BJ (cell line): ENCODE measurements at regions of chr12 and their contacts with region 1.

Region 1: DNA sequence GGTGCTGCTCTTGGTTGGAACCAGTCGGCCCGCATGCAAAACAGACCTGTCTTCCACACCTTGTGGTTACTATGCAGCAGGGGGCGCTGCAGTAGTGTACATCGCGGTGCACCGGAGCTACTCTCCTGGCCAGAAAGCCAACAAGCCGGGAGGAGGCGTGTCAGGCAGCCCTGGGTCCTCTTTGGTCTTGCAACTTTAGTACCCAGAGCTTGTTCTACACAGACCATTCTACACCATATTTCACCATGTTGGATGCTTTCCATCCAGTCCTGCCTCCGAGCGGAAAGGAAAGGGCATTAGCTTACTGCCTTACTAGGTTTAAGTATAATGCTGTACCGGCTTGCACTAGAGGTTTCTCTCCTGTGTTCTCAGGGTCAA is 927 bp upstream of the TMTC2 start:
- DNase-seq: peak; percentile 62
- H3K4me3 ChIP-seq: peak overlapping the region; percentile 73
- H3K27me3 ChIP-seq: no peaks in the 10 kb centered on the region; the same call in 1 of the 2 replicates
- CTCF ChIP-seq: peak; percentile 89

Region 2: GRCh38 chr12:82672811-82673495 is 12.8 kb before region 1 on chr12:
- CTCF ChIA-PET with region 1: interaction called, 11 read pairs
- POLR2A ChIA-PET with region 1: no interaction called
- DNase-seq: no peak
- H3K4me3 ChIP-seq: no peak overlapping the region
- H3K27me3 ChIP-seq: no peaks in the 10 kb centered on the region
- CTCF ChIP-seq: no peak

Region 3: DNA sequence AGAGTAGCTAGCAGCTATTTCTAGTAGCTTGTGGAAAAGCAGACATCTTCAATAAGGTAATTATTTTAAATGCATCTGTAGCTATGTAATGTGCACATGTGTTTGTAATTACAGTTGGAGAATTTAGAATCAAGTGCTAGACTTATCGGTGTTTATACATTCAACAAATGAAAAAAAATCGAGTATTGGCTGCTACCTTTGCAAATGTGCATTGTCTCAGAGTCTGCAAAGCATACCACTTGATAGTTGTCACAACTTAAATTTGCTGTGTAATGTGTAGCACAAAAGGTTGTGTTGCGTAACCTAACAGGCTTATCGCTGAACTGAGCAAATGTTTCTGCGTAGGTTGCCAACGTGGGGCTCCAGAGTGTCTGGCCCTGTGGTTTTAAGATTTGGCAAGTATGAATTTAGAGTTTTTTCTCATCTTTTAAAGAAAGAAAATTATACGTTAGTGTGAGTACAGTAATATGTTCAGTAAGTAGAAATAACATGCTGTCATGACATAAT is 45.2 kb after region 1 on chr12:
- CTCF ChIA-PET with region 1: no interaction called
- POLR2A ChIA-PET with region 1: interaction called, 13 read pairs
- DNase-seq: no peak
- H3K4me3 ChIP-seq: no peak overlapping the region
- H3K27me3 ChIP-seq: no peaks in the 10 kb centered on the region
- CTCF ChIP-seq: no peak

Region 4: DNA sequence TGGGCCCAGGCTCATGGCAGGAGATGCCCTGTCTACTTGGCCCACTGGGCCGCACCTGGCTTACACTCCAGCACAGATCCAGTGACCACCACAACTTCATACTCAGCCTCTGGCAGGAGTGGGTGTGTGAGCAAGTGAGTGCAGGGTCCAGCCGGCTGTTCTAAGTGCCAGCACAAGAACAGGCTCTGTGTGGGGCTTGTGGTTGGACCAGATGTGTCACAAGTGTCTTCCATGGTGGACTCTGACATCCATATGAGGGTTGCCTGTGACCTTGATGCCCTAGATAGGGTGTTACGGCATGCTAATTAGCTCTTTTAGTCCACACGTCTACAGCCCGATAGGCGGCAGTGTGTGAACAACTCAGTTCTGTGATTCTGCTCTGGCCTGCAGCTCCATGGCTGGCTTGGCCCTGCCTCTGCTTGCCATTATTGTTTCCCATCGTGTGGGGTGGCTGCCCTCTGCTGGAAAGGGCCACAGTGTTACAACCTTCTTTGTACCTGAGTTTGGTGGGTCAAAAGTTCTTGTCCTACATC is 1137.7 kb after region 1 on chr12:
- CTCF ChIA-PET with region 1: interaction called, 14 read pairs
- POLR2A ChIA-PET with region 1: no interaction called
- DNase-seq: no peak
- H3K4me3 ChIP-seq: no peak overlapping the region
- H3K27me3 ChIP-seq: no peaks in the 10 kb centered on the region
- CTCF ChIP-seq: peak; percentile 36

Region 5: DNA sequence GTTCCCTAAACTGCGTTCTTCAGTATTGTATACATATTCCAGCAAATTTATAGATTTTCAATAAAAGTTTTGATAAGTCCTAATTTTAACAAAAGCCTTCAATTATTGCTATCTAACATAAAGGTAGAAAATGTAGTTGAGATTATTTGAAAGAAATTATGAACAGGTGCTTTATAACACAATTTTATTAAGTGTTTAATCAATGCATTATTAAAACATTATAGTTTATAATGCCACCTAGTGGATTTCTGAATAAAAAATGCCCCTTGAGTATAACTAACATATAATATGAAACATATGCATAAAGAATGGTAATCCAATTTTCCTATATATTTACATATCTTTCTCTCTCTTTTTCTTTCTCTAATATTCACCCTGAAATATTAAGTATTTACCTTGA is 1711.5 kb after region 1 on chr12:
- CTCF ChIA-PET with region 1: interaction called, 10 read pairs
- POLR2A ChIA-PET with region 1: no interaction called
- DNase-seq: no peak
- H3K4me3 ChIP-seq: no peak overlapping the region
- H3K27me3 ChIP-seq: no peaks in the 10 kb centered on the region
- CTCF ChIP-seq: peak; percentile 13; the same call in 1 of the 2 replicates

Region 6: DNA sequence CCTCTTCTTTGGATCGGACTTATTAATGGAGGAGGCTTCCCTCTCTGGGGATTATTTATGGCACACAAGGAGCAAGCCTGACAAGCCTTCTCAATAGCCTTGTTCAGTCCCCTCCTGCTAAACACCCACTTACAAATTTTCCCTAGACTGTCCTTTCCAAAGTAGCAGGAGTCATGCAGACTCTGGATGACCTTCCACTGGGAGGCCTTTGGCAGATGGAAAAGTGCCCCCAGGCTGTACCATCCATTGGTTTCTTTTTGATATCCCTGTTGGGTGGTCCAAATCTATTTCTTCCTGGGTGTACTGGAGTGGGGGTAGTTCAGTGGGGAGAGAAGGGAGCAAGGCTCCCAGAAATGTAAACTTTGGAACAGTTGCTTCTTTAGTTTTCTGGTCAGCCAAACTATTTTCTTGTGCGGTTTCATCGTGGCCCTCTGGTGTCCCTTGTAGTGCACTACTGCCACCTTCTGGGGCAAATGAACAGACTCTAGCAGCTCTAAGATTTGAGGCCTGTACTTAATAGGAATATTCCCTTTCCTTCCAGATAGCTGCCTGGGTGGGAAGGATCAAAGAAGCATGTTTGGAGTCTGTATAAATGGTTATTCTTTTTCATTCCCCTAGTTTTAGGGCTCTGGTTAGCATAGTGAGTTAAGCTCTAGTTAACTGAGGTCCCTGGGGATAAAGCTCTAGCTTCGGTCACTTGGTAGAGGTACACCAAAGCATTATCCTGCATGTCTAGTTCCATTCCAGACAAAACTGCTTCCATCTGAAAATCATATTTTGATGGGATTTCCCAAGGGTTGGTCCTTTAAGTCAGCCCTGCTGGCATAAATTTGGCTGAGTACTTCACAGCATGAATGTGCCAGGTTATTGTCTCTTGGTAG is 1817.4 kb after region 1 on chr12:
- CTCF ChIA-PET with region 1: interaction called, 35 read pairs
- POLR2A ChIA-PET with region 1: no interaction called
- DNase-seq: no peak
- H3K4me3 ChIP-seq: no peak overlapping the region
- H3K27me3 ChIP-seq: no peaks in the 10 kb centered on the region
- CTCF ChIP-seq: peak; percentile 81

Region 7: DNA sequence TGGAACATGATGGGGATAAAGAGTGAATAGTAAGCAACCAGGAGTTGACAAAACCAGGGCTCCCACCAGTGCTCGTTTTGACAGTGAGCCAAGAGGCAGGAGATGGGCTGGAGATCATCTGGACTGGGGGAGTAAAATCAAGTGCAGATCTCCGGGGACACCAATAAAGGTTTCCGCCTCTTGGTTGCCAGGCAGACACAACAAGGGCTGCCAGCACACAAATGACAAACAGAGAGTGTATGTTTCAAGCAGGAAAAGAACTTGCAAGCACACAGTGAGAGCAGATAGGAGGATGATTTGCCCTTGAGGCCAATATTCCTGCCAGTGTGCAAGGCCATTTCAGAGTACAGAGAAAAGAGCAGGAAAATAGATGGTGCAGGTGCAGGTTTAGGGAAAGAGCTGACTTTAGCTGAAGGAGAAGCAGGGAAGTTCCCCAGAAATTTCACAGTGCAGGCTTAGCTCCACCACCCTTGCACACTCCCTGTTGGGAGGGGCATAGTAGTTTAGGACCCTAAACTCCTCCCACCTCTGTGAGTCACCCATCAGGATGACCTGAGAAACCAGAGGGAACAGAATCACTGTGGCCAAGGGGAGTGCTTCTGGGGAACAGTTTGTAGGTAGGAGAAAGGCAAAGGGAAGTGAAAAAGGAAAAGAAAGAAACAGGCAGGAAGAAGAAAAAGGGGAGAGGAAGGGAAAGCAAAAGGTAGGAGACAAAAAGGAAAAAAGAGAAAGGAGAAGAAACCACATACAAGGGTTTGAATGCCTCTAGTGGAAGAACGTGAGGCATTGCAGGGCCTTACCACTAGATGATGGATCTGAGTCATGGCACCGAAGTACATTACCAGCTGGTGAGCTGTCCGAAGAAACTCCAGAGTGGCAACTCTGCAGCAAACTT is 1822.4 kb after region 1 on chr12:
- CTCF ChIA-PET with region 1: interaction called, 35 read pairs
- POLR2A ChIA-PET with region 1: no interaction called
- DNase-seq: peak; percentile 46
- H3K4me3 ChIP-seq: no peak overlapping the region
- H3K27me3 ChIP-seq: no peaks in the 10 kb centered on the region
- CTCF ChIP-seq: peak; percentile 76